Colonic mucosa (tissue), 4 donors: ENCODE measurements at regions of chr15 and their contacts with region 1.

Region 1: DNA sequence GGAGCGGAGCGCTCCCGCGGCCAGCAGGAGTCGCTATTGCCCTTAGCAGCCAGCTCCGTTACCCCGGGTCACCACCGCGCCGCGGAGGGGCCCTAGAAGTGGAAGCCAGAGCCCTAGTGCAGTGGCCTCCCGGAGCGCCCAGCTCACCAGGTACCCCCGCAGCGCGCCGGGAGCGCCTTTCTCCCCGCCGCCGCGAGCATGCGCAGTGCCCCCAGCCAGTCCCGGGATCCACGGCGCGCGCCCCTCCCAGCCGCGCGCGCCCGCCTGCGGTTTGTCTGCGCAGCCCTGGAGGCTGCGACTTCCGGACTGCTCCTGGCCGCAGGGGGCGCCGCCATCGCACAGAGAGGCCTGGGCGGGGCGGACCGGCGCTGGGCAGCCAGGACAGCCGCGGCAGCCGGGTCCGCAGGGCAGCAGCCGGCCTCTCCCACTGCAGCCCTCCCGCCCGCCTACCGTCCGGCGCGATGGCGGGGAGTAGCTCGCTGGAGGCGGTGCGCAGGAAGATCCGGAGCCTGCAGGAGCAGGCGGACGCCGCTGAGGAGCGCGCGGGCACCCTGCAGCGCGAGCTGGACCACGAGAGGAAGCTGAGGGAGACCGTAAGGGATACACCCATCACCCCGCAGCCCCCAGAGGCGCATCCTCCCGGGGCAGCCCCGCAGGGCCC is 5.7 kb downstream of the TPM1 start:
- DNase-seq: peak; percentile 92
- H3K4me3 ChIP-seq: peak overlapping the region; percentile 94
- H3K27ac ChIP-seq: peak overlapping the region; percentile 97
- H3K4me1 ChIP-seq: peaks cover 12% of the 10 kb centered on the region
- H3K27me3 ChIP-seq: no peaks in the 10 kb centered on the region
- CTCF ChIP-seq: peak; percentile 90

Region 2: DNA sequence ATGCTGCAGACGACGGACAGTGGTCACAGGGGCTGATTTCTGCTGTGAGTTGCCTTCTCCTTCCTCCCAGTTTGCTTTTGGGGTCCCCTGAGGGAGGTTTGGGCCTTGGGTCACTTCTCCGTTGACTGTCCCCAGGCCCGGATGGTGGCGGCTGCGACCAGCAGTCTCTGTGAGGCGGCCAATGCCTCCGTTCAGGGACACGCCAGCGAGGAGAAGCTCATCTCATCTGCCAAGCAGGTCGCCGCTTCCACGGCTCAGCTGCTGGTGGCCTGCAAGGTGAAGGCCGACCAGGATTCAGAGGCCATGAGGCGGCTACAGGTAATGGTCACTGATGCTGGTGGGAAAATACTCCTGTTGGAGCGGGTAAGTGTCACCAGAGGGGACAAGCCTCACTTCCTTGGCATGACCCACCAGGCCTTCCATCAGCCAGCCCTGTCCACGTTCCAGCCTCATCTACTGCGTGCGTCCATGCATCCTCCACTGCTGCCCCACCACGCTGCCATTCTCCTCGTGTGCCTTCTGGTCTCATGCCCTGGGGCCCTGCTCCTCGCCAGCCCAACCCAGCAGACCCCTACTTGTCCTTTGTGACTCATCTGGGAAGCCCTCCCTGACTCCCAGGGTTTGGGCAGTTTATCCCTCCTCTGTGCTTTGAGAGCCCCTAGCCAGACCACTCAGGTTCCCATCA is 212.3 kb before region 1 on chr15:
- intact Hi-C with region 1: no loop called
- DNase-seq: no peak
- H3K4me3 ChIP-seq: no peak overlapping the region
- H3K27ac ChIP-seq: no peak overlapping the region
- H3K4me1 ChIP-seq: no peaks in the 10 kb centered on the region
- H3K27me3 ChIP-seq: no peaks in the 10 kb centered on the region
- CTCF ChIP-seq: no peak

Region 3: GRCh38 chr15:63093486-63094205 is 45.4 kb after region 1 on chr15:
- intact Hi-C with region 1: loop called (anchors 2 kb)
- DNase-seq: peak; percentile 92
- H3K4me3 ChIP-seq: no peak overlapping the region
- H3K27ac ChIP-seq: no peak overlapping the region
- H3K4me1 ChIP-seq: no peaks in the 10 kb centered on the region
- H3K27me3 ChIP-seq: no peaks in the 10 kb centered on the region
- CTCF ChIP-seq: peak; percentile 80